BJ (cell line): ENCODE measurements at regions of chr17 and their contacts with region 1.

Region 1: GRCh38 chr17:49496183-49496866 is 1.2 kb downstream of the NGFR start:
- DNase-seq: no peak
- H3K4me3 ChIP-seq: no peak overlapping the region
- H3K27me3 ChIP-seq: peaks cover 59% of the 10 kb centered on the region
- CTCF ChIP-seq: peak; percentile 41; the same call in 1 of the 2 replicates

Region 2: GRCh38 chr17:49482144-49482817 is 14.0 kb before region 1 on chr17:
- CTCF ChIA-PET with region 1: interaction called, 12 read pairs
- POLR2A ChIA-PET with region 1: no interaction called
- DNase-seq: no peak
- H3K4me3 ChIP-seq: no peak overlapping the region
- H3K27me3 ChIP-seq: peaks cover 45% of the 10 kb centered on the region
- CTCF ChIP-seq: no peak

Region 3: GRCh38 chr17:49508061-49508865 is 11.9 kb after region 1 on chr17:
- CTCF ChIA-PET with region 1: interaction called, 23 read pairs
- POLR2A ChIA-PET with region 1: no interaction called
- DNase-seq: no peak
- H3K4me3 ChIP-seq: no peak overlapping the region
- H3K27me3 ChIP-seq: peaks cover 22% of the 10 kb centered on the region
- CTCF ChIP-seq: no peak

Region 4: GRCh38 chr17:49646391-49647255 is 150.3 kb after region 1 on chr17:
- CTCF ChIA-PET with region 1: no interaction called
- POLR2A ChIA-PET with region 1: no interaction called
- DNase-seq: peak; percentile 59
- H3K4me3 ChIP-seq: no peak overlapping the region
- H3K27me3 ChIP-seq: no peaks in the 10 kb centered on the region
- CTCF ChIP-seq: no peak

Region 5: GRCh38 chr17:49659661-49660382 is 163.5 kb after region 1 on chr17:
- CTCF ChIA-PET with region 1: no interaction called
- POLR2A ChIA-PET with region 1: no interaction called
- DNase-seq: no peak
- H3K4me3 ChIP-seq: no peak overlapping the region
- H3K27me3 ChIP-seq: no peaks in the 10 kb centered on the region
- CTCF ChIP-seq: no peak